Naive thymus-derived CD4-positive, alpha-beta T cell (primary cell): ENCODE measurements at regions of chr2 and their contacts with region 1.

Region 1: DNA sequence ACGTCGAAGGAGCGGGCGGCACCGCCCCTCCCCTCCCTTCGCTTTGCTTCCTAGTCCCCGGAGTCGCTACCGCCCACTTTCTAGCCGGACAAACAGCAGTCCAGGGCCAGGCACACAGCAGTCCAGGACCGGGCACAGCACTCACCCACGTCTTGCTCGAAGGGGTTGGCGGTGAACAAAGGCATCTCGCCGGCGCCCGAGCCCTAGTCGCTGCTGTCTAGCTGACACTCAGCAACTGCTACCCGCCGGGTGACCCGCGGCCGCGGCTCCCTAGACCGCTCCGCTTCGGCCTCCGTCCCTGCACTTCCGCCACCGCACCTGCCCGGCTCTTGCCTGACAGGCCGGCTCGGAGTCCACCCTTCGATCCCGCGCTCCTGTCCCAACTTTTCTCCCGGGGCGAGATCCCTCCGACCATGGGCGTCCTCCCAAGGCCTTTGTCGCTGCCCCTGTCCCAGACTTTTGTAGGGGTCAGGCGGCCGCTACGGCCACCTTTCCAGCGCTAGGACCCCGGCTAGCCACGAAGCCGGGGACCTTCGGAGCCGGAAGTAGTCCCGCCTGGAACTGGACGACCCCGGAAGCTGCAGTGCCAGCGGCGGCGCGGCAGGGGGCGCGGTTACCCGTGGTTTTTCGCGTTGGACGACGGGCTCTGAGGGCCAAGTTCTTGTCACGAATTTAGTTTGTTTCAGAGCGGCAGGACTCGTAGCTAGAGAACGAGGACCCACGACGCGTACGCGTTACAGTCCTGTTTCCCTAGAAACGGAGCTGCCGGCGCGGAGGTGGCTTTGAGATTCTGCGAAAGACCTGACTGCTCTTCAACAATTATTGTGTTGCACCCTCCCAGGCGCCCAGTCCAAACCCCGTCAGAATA is at the start of gene STAM2:
- DNase-seq: peak; percentile 79 to 95 (median 93)
- ATAC-seq: peak; percentile 93
- H3K4me3 ChIP-seq: peak within 1 kb of the TSS; percentile 80
- H3K4me3 Mint-ChIP-seq: peak within 1 kb of the TSS; percentile 90 to 99 (median 96)
- H3K27ac ChIP-seq: peak within 1 kb of the TSS; percentile 91
- H3K27ac Mint-ChIP-seq: peak within 1 kb of the TSS; percentile 96 to 99 (median 99)
- H3K4me1 ChIP-seq: peaks cover 0 to 14% of the 10 kb centered on the region in 2 donors
- H3K4me1 Mint-ChIP-seq: peaks cover 22 to 46% (median 36%) of the 10 kb centered on the region in 7 donors
- H3K27me3 ChIP-seq: no peaks in the 10 kb centered on the region
- H3K27me3 Mint-ChIP-seq: peaks cover 0 to 7% (median 2%) of the 10 kb centered on the region in 5 donors
- total RNA-seq, gene STAM2: 12.6 to 22.2 (median 20.0) TPM

Region 2: GRCh38 chr2:151261231-151261976 is 914.3 kb before region 1 on chr2 and contains the start of gene RBM43:
- CTCF ChIA-PET with region 1: no interaction called
- POLR2A ChIA-PET with region 1: interaction called, 3 read pairs
- intact Hi-C with region 1: loop called (anchors 5 kb)
- DNase-seq: peak; percentile 56 to 86 (median 80)
- ATAC-seq: peak; percentile 91
- H3K4me3 ChIP-seq: peak within 1 kb of the TSS; percentile 87
- H3K4me3 Mint-ChIP-seq: peak within 1 kb of the TSS; percentile 85 to 98 (median 96)
- H3K27ac ChIP-seq: peak within 1 kb of the TSS; percentile 96
- H3K27ac Mint-ChIP-seq: peak within 1 kb of the TSS; percentile 90 to 99 (median 99)
- H3K4me1 ChIP-seq: no peaks in the 10 kb centered on the region
- H3K4me1 Mint-ChIP-seq: peaks cover 11 to 47% (median 31%) of the 10 kb centered on the region in 7 donors
- H3K27me3 ChIP-seq: no peaks in the 10 kb centered on the region
- H3K27me3 Mint-ChIP-seq: no peaks in the 10 kb centered on the region
- total RNA-seq, gene RBM43: 6.4 to 19.2 (median 15.7) TPM

Region 3: GRCh38 chr2:151638191-151638933 is 537.3 kb before region 1 on chr2:
- CTCF ChIA-PET with region 1: no interaction called
- POLR2A ChIA-PET with region 1: no interaction called
- intact Hi-C with region 1: loop called in 1 of 2 experiments (anchors 5 kb)
- DNase-seq: peak in 8 of 9 donors; percentile 23 to 66 (median 52)
- ATAC-seq: peak; percentile 59
- H3K4me3 ChIP-seq: peak overlapping the region; percentile 42
- H3K4me3 Mint-ChIP-seq: peak overlapping the region; percentile 18 to 89 (median 84)
- H3K27ac ChIP-seq: peak overlapping the region; percentile 69
- H3K27ac Mint-ChIP-seq: peak overlapping the region; percentile 90 to 97 (median 94)
- H3K4me1 ChIP-seq: peaks cover 33 to 40% of the 10 kb centered on the region in 2 donors
- H3K4me1 Mint-ChIP-seq: peaks cover 32 to 57% (median 38%) of the 10 kb centered on the region in 7 donors
- H3K27me3 ChIP-seq: no peaks in the 10 kb centered on the region
- H3K27me3 Mint-ChIP-seq: no peaks in the 10 kb centered on the region

Region 4: DNA sequence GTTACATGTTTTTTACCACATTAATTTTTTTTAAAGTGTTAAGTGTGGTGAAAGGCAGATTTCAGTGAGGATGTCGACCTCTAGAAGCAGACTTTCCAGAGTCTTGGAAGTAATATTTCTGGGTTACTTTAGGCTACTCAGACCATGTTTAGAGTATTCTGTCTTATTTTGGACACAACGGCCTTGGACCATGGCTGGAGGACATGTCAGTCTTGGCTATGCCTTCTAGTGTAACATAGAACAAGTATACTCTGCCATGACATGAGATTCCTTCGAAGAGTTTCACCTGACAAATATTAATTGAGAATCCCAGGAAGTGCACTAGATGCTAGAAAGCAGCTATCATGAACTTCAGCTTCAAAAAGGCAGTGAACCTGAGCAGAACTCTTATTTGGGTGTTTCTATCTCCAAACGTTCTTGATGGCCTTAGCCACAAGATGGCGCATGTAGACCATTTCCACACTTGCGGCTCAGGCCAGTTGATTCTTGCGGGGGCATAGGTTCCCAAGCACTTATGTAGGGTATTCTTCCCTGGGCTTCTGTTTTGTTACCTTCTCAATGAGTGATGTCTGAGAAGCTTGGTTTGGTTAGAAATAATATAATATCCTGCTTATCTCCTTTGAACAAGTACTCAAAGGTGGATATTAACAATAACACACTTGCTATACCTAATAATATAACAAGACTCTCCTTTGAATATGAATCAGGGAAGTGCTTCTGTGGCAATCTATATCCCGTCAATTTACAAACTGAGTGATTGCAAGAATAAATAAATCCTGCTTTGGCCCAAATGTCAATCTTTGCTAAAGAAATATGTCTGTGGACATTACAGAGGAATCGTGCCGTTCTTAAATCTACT is 138.9 kb before region 1 on chr2:
- CTCF ChIA-PET with region 1: no interaction called
- POLR2A ChIA-PET with region 1: interaction called, 3 read pairs
- intact Hi-C with region 1: loop called in 1 of 2 experiments (anchors 1 kb)
- DNase-seq: peak; percentile 5 to 51 (median 32)
- ATAC-seq: peak; percentile 74
- H3K4me3 ChIP-seq: no peak overlapping the region
- H3K4me3 Mint-ChIP-seq: no peak overlapping the region
- H3K27ac ChIP-seq: no peak overlapping the region
- H3K27ac Mint-ChIP-seq: no peak overlapping the region
- H3K4me1 ChIP-seq: no peaks in the 10 kb centered on the region
- H3K4me1 Mint-ChIP-seq: no peaks in the 10 kb centered on the region
- H3K27me3 ChIP-seq: no peaks in the 10 kb centered on the region
- H3K27me3 Mint-ChIP-seq: peaks cover 0 to 4% (median 0%) of the 10 kb centered on the region in 5 donors

Region 5: DNA sequence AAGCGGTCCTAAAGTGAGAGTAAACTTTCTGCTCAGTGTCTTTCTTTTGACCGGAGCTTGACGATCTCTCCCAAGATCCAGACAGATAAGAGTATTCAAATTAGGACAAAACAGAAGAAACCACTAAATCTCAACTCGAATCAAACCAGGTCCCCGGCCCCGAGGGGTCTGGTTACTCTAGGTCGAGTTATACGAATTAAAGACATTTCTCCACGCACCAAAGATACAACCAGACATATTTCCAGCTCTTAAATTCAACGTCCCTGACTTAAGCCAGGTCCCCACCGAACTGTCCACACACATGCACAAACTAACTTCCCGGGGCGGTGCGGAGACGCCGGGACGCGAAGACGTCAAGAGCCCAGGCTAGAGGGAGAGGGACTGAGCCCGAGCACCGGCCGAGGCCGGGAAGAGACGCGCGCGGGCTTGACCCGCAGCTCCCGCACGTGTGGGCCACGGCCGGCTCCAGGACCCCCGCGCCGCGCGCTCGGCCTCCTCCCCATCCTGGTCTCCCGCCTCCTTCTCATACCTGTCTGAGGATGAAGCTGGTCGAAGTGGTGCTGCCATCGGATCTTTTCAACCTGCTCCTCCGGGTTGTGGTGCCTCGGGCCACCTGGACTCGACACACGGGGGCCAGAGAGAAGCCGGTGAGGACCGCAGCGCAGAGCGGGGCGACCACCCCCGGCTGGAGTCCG is 77.7 kb before region 1 on chr2:
- CTCF ChIA-PET with region 1: no interaction called
- POLR2A ChIA-PET with region 1: no interaction called
- intact Hi-C with region 1: no loop called
- DNase-seq: peak in 2 of 9 donors; percentile 2 to 23
- ATAC-seq: peak; percentile 56
- H3K4me3 ChIP-seq: peak overlapping the region; percentile 42
- H3K4me3 Mint-ChIP-seq: peak overlapping the region; percentile 72 to 93 (median 82)
- H3K27ac ChIP-seq: no peak overlapping the region
- H3K27ac Mint-ChIP-seq: peak overlapping the region in 1 of 9 donors; percentile 14
- H3K4me1 ChIP-seq: peaks cover 5 to 6% of the 10 kb centered on the region in 2 donors
- H3K4me1 Mint-ChIP-seq: peaks cover 17 to 24% (median 22%) of the 10 kb centered on the region in 7 donors
- H3K27me3 ChIP-seq: peaks cover 16 to 24% of the 10 kb centered on the region in 2 donors
- H3K27me3 Mint-ChIP-seq: peaks cover 40 to 63% (median 61%) of the 10 kb centered on the region in 5 donors

Region 6: DNA sequence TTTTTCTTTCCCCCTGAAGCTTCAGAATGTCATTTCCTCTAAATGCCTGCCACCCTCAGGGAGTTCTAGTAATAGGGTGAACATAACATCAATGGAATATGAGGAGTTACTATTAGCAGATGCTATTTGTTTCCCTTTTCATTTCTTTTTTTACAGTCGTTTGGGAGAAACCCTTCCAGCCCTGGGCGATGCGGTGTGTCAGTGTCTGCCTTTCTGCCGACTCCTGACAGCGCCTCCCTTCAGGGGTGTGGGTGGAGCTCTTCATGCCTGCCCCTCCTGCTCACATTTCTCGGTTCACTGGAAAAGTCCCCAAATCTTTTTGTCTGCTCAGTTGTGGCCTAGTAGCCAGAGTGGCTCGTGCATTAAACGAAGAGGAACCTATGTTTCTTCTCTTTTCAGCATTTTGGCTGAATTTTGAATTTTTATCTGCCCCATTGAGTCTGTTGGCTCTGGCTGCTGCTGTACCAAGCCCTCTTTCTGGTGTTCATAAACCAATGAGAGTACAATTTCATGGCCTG is 231.6 kb after region 1 on chr2:
- CTCF ChIA-PET with region 1: no interaction called
- POLR2A ChIA-PET with region 1: no interaction called
- intact Hi-C with region 1: loop called in 1 of 2 experiments (anchors 1 kb)
- DNase-seq: peak in 1 of 9 donors; percentile 47
- ATAC-seq: peak; percentile 57
- H3K4me3 ChIP-seq: no peak overlapping the region
- H3K4me3 Mint-ChIP-seq: peak overlapping the region in 7 of 10 donors; percentile 28 to 78 (median 44)
- H3K27ac ChIP-seq: no peak overlapping the region
- H3K27ac Mint-ChIP-seq: peak overlapping the region in 1 of 9 donors; percentile 63
- H3K4me1 ChIP-seq: no peaks in the 10 kb centered on the region
- H3K4me1 Mint-ChIP-seq: peaks cover 2 to 38% (median 6%) of the 10 kb centered on the region in 7 donors
- H3K27me3 ChIP-seq: no peaks in the 10 kb centered on the region
- H3K27me3 Mint-ChIP-seq: peaks cover 0 to 46% (median 22%) of the 10 kb centered on the region in 5 donors

Region 7: GRCh38 chr2:152717228-152718075 is 541.8 kb after region 1 on chr2 and contains the start of gene PRPF40A:
- CTCF ChIA-PET with region 1: no interaction called
- POLR2A ChIA-PET with region 1: interaction called, 12 read pairs
- intact Hi-C with region 1: loop called (anchors 1 kb)
- DNase-seq: peak; percentile 97 to 99 (median 98)
- ATAC-seq: peak; percentile 83
- H3K4me3 ChIP-seq: peak within 1 kb of the TSS; percentile 98
- H3K4me3 Mint-ChIP-seq: peak within 1 kb of the TSS; percentile 97 to 100 (median 99)
- H3K27ac ChIP-seq: peak within 1 kb of the TSS; percentile 93
- H3K27ac Mint-ChIP-seq: peak within 1 kb of the TSS; percentile 97 to 100 (median 99)
- H3K4me1 ChIP-seq: peaks cover 21 to 35% of the 10 kb centered on the region in 2 donors
- H3K4me1 Mint-ChIP-seq: peaks cover 47 to 84% (median 73%) of the 10 kb centered on the region in 7 donors
- H3K27me3 ChIP-seq: no peaks in the 10 kb centered on the region
- H3K27me3 Mint-ChIP-seq: no peaks in the 10 kb centered on the region
- total RNA-seq, gene PRPF40A: 104 to 126 (median 109) TPM